Sigmoid colon (tissue), 7 donors: ENCODE measurements at regions of chr7 and their contacts with region 1.

Region 1: DNA sequence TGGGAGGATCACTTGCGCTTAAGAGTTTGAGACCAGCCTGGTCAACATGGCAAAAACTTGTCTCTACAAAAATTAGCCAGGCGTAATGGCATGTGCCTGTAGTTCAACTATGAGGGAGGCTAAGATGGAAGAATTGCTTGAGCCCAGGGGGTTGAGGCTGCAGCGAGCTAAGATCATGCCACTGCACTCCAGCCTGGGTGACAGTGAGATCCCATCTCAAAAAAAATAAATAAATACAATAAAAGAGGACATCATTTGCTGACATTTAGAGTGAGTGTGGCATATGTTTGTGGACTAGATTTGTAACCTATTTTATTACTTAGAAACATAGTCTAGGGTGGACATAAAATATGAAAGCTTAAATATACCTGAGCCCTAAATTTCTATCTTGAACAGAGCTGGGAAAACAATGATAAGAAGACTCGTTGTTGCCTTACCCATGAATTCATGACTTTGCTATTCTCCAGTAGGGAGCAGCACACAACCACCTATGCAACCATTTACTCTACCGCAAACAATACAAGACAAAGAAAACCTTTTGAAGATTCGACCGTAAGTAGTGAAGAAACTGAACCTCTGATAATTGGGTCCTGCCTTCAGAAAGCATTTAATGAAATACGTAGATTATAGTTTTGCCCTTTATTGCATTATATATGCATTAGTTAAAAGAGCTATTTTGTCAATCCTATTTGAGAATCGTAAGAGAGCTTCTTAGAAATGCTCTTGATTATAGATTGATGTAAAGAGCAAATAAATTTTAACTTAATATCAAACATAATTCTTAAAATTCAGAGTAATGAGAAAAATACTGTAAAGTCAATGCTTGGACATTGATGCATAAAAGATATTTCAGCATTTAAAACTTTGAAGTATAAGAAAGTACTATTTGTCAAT is 83.5 kb downstream of the GNAT3 start:
- DNase-seq: no peak
- H3K4me3 ChIP-seq: no peak overlapping the region
- H3K27ac ChIP-seq: no peak overlapping the region
- H3K4me1 ChIP-seq: no peaks in the 10 kb centered on the region
- H3K27me3 ChIP-seq: no peaks in the 10 kb centered on the region
- CTCF ChIP-seq: peak; percentile 58 to 75 (median 64)
- EP300 ChIP-seq: no peak
- POLR2A ChIP-seq: no peak

Region 2: DNA sequence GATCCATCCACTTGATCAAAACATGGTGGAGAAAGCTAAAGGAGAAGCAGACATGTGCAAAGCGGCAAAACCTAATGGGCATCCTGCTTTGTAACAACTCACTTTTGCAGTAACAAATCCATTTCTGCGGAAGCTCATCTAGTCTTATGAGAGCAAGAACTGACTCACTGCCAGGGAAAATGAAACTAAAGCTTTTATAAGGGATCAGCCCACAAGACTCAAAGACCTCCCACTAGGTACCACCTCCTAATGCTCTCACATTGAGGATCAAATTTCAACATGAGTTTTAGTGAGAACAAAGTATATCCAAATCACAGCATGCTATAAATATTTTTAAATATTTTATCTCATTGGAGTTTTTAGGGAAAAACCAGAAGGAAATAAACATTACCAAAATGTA is 413.9 kb before region 1 on chr7:
- intact Hi-C with region 1: no loop called
- DNase-seq: no peak
- H3K4me3 ChIP-seq: no peak overlapping the region
- H3K27ac ChIP-seq: no peak overlapping the region
- H3K4me1 ChIP-seq: no peaks in the 10 kb centered on the region
- H3K27me3 ChIP-seq: no peaks in the 10 kb centered on the region
- CTCF ChIP-seq: no peak
- EP300 ChIP-seq: no peak
- POLR2A ChIP-seq: no peak

Region 3: DNA sequence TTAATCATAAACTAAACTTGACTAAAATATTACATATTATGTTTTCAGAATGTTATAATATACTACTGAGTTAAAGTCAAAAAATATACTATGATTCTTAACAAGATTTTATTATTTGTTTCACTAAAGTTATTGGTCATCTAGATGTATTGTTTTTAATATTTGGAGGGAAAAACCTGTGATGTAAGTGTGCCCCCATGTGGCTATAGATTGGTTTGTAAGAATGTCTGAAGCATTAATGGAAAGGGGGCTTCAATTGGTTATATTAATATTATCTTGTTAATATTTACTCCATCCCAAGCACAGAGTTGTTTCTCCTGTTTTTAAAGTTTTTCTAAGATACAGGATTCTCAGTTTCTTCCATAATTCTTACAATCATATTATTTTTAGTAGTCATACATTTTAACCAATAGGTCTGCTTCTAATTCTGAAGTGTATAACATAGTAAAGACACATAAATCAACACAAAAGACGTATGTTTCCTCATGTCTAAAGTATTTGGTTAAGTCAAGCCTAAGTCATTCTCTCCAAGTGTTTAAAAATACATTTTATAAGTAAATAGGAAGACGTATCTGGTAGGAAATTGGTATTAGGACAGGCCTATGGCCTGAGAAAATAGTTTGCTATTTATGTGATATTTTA is 25.4 kb after region 1 on chr7:
- intact Hi-C with region 1: loop called (anchors 2 kb)
- DNase-seq: no peak
- H3K4me3 ChIP-seq: no peak overlapping the region
- H3K27ac ChIP-seq: no peak overlapping the region
- H3K4me1 ChIP-seq: no peaks in the 10 kb centered on the region
- H3K27me3 ChIP-seq: no peaks in the 10 kb centered on the region
- CTCF ChIP-seq: peak in 3 of 4 experiments; percentile 30 to 48 (median 34)
- EP300 ChIP-seq: no peak
- POLR2A ChIP-seq: no peak

Region 4: GRCh38 chr7:80659120-80660055 is 231.0 kb after region 1 on chr7:
- intact Hi-C with region 1: loop called (anchors 2 kb)
- DNase-seq: no peak
- H3K4me3 ChIP-seq: no peak overlapping the region
- H3K27ac ChIP-seq: no peak overlapping the region
- H3K4me1 ChIP-seq: peaks cover 0 to 8% (median 4%) of the 10 kb centered on the region in 4 donors
- H3K27me3 ChIP-seq: no peaks in the 10 kb centered on the region
- CTCF ChIP-seq: peak; percentile 42 to 79 (median 58)
- EP300 ChIP-seq: no peak
- POLR2A ChIP-seq: no peak